ENCODE measurements at regions of chr2 and their contacts with region 1.

Region 1: GRCh38 chr2:101419096-101419663 is 31.9 kb upstream of the CREG2 start:
- DNase-seq: peak; percentile 18 to 83 (median 49)
- ATAC-seq: peak; percentile 76
- H3K4me3 ChIP-seq: no peak overlapping the region
- H3K4me3 Mint-ChIP-seq: no peak overlapping the region
- H3K27ac ChIP-seq: no peak overlapping the region
- H3K27ac Mint-ChIP-seq: no peak overlapping the region
- H3K4me1 ChIP-seq: no peaks in the 10 kb centered on the region
- H3K4me1 Mint-ChIP-seq: peaks cover 6% of the 10 kb centered on the region
- H3K27me3 ChIP-seq: no peaks in the 10 kb centered on the region
- H3K27me3 Mint-ChIP-seq: no peaks in the 10 kb centered on the region
- CTCF ChIP-seq: peak; percentile 74

Region 2: DNA sequence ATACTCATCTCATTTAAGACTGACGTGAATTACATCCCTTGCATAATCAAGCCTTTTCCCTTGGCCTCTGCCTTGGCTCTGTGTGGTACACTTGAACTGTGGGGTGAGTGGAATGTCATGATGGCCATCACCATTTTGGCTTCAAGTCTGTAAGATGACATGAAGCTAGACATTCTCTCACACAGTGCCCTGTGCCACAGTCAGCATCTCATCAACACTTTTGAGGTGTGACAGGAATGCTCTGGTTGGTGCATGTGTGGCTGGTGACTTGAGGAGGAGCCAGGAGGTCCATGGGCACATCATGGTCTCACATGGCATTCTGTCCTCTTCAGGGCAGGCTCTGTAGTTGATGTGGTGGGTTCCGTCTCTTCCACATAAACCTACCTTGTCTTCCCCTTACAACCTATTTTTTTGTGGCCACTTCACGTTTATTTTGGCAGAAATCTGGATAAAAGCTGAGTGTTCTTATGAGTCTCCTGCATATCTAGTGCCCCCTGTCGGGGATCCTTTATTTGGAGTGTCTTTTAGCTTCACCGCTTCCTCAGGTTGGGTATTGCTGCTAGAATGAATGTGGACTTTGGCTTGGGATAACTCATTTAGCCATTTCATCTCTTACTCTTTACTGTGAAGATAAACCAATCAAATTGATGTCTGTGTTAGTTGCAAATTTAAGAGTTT is 306.5 kb after region 1 on chr2:
- CTCF ChIA-PET with region 1: interaction called, 13 read pairs
- POLR2A ChIA-PET with region 1: no interaction called
- intact Hi-C with region 1: no loop called
- DNase-seq: peak in 4 of 14 experiments; percentile 47 to 65 (median 58)
- ATAC-seq: no peak
- H3K4me3 ChIP-seq: no peak overlapping the region
- H3K4me3 Mint-ChIP-seq: peak overlapping the region; percentile 16
- H3K27ac ChIP-seq: no peak overlapping the region
- H3K27ac Mint-ChIP-seq: peak overlapping the region; percentile 50
- H3K4me1 ChIP-seq: peaks cover 57% of the 10 kb centered on the region
- H3K4me1 Mint-ChIP-seq: peaks cover 96% of the 10 kb centered on the region
- H3K27me3 ChIP-seq: no peaks in the 10 kb centered on the region
- H3K27me3 Mint-ChIP-seq: no peaks in the 10 kb centered on the region
- CTCF ChIP-seq: no peak

Region 3: DNA sequence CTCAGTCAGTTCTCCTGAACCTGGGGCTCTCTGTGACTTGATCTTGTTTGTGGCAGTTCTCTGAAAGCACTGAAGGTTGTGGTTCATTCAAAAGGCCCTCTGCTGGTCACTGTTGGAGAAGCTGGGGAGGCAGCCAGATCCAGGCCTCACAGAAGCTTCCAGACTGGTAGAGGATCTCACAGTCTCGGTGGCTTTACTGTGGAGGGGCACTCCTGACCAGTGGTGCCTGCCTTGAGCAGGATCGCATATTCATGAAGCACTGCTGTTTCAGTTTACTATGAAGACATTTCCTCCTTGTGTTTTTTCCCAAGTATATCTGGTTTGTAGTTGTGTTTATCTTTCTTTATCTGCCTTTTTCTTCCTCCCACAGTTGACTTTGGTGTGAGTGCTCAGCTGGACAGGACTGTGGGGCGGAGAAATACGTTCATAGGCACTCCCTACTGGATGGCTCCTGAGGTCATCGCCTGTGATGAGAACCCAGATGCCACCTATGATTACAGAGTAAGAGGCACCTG is 412.2 kb after region 1 on chr2:
- CTCF ChIA-PET with region 1: interaction called, 19 read pairs
- POLR2A ChIA-PET with region 1: interaction called, 24 read pairs
- intact Hi-C with region 1: loop called (anchors 1 kb)
- DNase-seq: peak; percentile 40 to 78 (median 52)
- ATAC-seq: peak; percentile 62
- H3K4me3 ChIP-seq: no peak overlapping the region
- H3K4me3 Mint-ChIP-seq: peak overlapping the region; percentile 40
- H3K27ac ChIP-seq: no peak overlapping the region
- H3K27ac Mint-ChIP-seq: peak overlapping the region; percentile 44
- H3K4me1 ChIP-seq: peaks cover 41% of the 10 kb centered on the region
- H3K4me1 Mint-ChIP-seq: peaks cover 53% of the 10 kb centered on the region
- H3K27me3 ChIP-seq: no peaks in the 10 kb centered on the region
- H3K27me3 Mint-ChIP-seq: no peaks in the 10 kb centered on the region
- CTCF ChIP-seq: peak; percentile 59

Region 4: DNA sequence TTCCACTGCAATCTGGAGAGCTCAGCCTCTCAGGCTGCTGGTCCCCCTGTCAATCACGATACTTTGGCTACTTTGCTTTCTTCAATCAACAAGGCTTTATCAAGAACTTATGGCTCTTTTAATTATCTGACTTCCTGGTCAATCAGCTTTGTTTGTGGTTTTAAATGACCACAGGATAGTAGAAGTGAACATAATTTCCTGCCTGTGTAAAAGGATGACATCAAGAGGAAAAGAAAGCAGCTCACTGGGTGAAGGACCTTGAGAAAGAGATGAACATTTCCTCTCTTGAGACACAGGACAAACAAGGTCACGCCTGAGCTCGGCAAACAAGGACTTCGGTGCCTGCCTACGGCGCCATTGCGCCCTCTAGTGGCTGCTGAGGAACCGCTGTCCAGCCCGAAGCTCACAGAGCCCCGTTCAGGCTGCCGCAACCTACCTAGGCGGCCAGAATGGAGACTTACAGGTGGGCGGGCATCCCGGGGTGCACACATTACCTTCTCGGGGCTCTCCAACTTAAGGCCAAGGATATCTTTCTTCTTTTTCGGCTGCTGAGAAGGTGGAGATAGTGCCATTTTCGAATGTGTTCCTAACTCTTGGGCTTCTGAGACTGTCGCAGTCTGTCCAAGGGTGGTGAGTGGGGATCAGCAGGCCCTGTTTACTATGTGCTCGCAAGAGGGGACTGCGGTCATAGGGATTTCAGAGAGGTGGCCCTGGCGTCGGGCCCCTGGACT is 821.6 kb after region 1 on chr2:
- CTCF ChIA-PET with region 1: no interaction called
- POLR2A ChIA-PET with region 1: no interaction called
- intact Hi-C with region 1: loop called (anchors 2 kb)
- DNase-seq: peak; percentile 74 to 93 (median 85)
- ATAC-seq: peak; percentile 94
- H3K4me3 ChIP-seq: no peak overlapping the region
- H3K4me3 Mint-ChIP-seq: no peak overlapping the region
- H3K27ac ChIP-seq: no peak overlapping the region
- H3K27ac Mint-ChIP-seq: no peak overlapping the region
- H3K4me1 ChIP-seq: peaks cover 21% of the 10 kb centered on the region
- H3K4me1 Mint-ChIP-seq: peaks cover 9% of the 10 kb centered on the region
- H3K27me3 ChIP-seq: no peaks in the 10 kb centered on the region
- H3K27me3 Mint-ChIP-seq: no peaks in the 10 kb centered on the region
- CTCF ChIP-seq: peak; percentile 93

Measured in CD4-positive, alpha-beta T cell (primary cell).